Mucosa of descending colon (tissue), 3 donors: ENCODE measurements at regions of chr7 and their contacts with region 1.

Region 1: DNA sequence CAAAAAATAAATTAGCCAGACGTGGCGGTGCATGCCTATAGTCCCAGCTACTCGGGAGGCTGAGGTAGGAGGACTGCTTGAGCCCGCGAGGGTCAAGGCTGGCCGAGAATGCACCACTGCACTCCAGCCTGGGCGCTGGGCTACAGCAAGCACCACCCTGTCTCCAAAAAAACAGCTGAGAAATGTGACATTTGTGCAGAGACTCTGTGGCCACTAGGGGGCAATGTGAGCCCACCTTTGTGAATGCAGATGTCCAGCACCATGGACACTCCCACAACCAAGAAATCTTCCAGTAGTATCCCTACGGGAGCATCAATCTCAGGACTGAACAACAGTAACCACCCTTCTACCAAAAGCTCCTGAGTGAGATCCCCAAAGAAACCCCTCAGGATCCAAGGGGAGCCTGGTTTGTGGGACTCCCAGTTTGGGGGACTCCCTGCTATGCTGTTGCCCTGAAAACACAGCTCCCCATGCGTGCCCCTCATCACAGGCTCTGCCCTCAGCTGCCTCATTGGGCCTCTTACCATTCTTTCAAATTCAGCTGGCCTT is 6.2 kb upstream of the AHCYL2 start:
- DNase-seq: peak in 2 of 3 donors; percentile 82 to 94
- ATAC-seq: peak; percentile 99
- H3K4me3 ChIP-seq: no peak overlapping the region
- H3K4me1 ChIP-seq: no peaks in the 10 kb centered on the region
- CTCF ChIP-seq: peak; percentile 87

Region 2: DNA sequence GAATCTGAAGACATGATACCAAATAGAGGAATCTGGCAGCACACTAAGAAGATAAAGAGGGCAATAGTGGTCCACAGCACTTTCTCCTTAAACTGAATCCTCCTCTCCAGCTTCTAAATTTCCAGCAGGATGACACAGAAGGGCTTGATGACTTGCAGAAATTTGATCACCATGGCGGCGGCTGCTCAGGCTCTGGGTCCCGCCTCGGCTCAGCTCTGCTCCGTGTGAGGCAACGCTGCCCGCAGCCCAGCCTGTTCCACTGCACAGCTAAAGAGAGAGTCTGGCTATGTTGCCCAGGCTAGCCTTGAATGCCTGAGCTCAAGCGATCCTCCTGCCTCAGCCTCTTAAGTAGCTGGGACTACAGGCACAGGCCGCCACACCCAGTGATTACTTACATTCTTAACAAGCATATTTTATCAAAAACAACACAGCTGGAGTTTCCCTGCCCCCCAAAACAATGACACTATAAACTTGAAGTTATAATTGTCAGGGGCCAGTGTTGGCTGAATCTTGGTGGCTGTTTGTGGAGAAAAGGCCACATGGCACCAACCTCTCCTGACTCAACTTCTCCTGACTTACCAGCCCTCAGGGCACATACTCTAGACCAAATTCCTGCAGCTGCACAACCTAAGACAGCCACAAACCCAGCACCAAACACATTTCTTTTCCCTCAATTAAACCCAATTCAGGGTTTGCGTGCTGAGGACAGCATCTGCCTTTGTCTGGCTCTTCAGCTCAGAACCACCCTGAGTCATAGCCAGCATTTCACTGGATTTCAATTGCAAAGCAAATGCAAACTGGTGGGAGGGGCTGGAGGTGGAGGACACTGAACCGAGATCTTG is 152.1 kb before region 1 on chr7:
- intact Hi-C with region 1: no loop called
- DNase-seq: no peak
- ATAC-seq: no peak
- H3K4me3 ChIP-seq: no peak overlapping the region
- H3K4me1 ChIP-seq: no peaks in the 10 kb centered on the region
- CTCF ChIP-seq: no peak

Region 3: GRCh38 chr7:129271500-129272355 is 53.1 kb after region 1 on chr7:
- intact Hi-C with region 1: loop called in 1 of 2 experiments (anchors 10 kb)
- DNase-seq: peak in 1 of 3 donors; percentile 83
- ATAC-seq: peak; percentile 92
- H3K4me3 ChIP-seq: no peak overlapping the region
- H3K4me1 ChIP-seq: no peaks in the 10 kb centered on the region
- CTCF ChIP-seq: peak; percentile 50

Region 4: DNA sequence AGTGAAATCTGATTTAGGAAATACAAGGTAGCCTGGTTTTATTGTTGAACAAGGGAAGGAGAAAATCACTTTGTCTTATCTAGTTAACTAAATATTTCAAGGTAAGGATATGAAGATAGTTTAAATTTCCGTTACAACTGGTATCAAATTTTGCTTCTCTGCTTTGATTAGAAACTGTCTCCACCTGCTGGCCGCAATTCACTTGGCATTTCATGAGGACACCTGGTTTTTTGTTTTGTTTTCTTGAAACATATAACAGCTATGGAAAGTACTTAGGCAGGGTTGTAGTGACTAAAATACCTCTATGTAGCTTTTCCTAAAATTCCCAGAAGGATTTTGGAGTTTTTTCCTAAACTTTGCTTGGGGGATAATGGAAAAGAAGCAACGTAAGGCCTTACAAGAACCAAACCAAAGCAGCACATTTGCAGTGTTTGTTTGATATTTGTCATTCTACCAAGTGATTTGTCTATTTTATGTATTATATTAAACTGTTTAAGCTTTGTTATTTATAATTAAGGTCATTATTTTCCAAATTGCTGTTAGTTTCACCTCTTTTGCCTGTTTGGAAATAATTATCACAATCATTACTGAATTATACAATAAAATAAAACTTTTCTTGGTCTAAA is 79.8 kb after region 1 on chr7:
- intact Hi-C with region 1: loop called in 1 of 2 experiments (anchors 2 kb)
- DNase-seq: peak in 2 of 3 donors; percentile 45 to 80
- ATAC-seq: no peak
- H3K4me3 ChIP-seq: no peak overlapping the region
- H3K4me1 ChIP-seq: no peaks in the 10 kb centered on the region
- CTCF ChIP-seq: peak; percentile 43

Region 5: DNA sequence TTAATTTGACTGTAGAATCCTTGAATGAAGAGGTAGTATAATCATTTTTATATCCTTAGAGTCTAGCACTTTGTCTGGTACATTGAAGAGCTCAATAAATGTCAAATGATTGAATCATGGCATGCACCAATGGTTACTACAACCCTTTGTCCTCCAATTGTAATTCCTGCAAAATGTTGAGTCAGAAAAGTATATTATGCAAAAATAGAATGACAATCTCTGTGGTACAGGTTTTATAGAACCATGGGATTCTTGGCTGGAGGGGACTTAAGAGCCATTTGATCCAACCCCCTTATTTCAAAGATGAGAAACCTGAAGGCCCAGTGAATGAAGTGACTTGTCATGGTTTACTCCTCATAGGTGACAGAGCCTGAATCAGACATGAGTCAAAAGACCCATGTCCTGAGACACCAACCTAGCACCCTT is 252.8 kb after region 1 on chr7:
- intact Hi-C with region 1: loop called in 1 of 2 experiments (anchors 5 kb)
- DNase-seq: no peak
- ATAC-seq: no peak
- H3K4me3 ChIP-seq: no peak overlapping the region
- H3K4me1 ChIP-seq: no peaks in the 10 kb centered on the region
- CTCF ChIP-seq: no peak